Vagina (tissue), 2 donors: ENCODE measurements at regions of chr2 and their contacts with region 1.

Region 1: DNA sequence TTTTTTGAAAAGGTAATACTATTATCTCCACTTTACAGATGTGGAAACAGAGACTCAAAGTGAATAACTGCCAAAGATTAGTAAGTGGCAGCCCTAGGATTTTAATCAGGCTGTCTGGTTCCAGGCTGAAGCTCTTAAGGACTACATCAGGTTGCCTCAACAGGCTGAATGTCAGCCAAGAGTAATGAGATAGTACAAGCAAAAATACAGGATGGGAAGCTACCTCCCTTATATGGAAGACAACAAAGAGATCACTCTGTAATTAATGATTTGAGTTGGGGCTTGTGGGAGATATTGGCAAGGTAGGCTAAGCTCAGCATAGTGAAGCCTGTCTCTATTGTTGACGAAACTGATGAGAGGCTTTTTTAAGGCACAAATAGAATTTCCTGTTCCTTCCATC is 323.1 kb downstream of the KCNJ3 start:
- DNase-seq: no peak
- H3K4me3 ChIP-seq: no peak overlapping the region
- H3K27ac ChIP-seq: no peak overlapping the region
- H3K4me1 ChIP-seq: no peaks in the 10 kb centered on the region
- H3K27me3 ChIP-seq: no peaks in the 10 kb centered on the region
- CTCF ChIP-seq: no peak
- POLR2A ChIP-seq: no peak

Region 2: DNA sequence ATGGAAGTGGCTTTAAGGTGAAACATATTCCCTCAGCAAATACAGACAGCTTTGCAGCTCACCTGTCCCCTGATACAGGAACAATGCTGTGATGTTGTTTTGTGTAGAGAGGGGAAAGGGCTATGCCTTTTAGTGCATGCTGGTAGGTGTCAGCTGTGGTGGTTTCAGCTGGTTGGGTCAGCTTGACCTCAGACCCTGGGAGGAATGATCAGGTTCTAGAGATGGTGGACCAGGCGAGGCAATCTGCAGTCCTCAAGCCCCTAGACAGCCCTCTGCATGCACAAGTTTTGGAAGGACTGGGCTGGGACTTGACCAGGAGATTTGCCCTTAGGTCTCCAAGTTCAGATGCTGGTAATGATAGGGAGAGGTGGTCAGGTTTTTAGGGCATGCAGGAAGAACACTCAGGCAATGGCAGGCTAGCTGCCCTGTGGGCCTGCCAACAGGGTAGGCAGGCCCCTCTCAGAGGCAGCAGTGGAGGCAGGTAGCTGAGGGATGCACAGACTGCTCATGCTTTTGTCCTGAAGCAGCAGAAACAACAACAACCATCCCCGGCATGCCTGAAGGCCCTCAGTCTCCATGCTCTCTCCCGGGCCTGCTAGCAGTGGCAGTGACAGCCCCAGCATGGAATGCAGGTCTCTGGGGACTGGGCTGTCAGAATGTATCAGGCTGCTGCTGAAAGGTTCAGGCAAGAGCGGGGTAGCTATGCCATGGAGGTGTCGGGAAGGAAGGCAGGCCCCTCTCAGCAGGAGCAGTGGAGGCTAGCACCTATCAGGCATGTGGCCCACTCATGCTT is 113.5 kb before region 1 on chr2:
- intact Hi-C with region 1: loop called (anchors 5 kb)
- DNase-seq: no peak
- H3K4me3 ChIP-seq: no peak overlapping the region
- H3K27ac ChIP-seq: no peak overlapping the region
- H3K4me1 ChIP-seq: no peaks in the 10 kb centered on the region
- H3K27me3 ChIP-seq: no peaks in the 10 kb centered on the region
- CTCF ChIP-seq: no peak
- POLR2A ChIP-seq: no peak

Region 3: GRCh38 chr2:155169317-155169716 is 147.7 kb after region 1 on chr2:
- intact Hi-C with region 1: no loop called
- DNase-seq: no peak
- H3K4me3 ChIP-seq: no peak overlapping the region
- H3K27ac ChIP-seq: no peak overlapping the region
- H3K4me1 ChIP-seq: no peaks in the 10 kb centered on the region
- H3K27me3 ChIP-seq: no peaks in the 10 kb centered on the region
- CTCF ChIP-seq: no peak
- POLR2A ChIP-seq: no peak